ENCODE measurements at regions of chr20 and their contacts with region 1.

Region 1: DNA sequence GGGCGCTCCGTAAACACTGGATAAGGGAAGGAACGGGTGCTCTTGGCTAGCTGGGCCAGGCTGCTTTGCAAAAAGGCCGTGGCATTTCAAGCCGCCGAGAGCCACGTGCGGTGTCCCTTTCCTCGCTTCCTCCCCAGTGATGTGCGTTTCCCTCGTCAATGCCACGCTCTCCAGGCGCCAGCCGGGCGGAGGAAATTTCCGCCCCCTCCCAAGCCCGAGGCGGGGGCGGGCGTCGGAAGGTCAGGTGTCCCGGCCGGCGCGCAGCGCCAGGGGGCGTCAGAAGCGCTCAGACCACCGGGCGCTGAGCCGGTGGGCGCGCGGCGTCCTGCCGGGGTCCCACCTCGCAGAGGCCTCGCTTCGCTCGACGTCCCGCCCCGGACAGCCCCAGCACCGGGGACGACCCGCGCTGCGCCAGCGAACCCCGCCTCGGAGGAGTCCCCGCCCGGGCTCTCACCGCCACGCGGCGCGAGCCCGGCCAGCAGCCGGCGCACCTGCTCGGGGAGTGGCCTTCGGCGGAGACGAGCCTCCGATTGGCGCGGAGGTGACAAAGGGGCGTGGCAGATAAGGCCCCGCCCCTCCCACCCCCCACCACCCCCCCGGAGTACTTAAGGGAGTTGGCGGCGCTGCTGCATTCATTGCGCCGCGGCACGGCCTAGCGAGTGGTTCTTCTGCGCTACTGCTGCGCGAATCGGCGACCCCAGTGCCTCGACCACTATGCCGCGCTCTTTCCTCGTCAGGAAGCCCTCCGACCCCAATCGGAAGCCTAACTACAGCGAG is at the start of gene SNAI1:
- DNase-seq: peak; percentile 87
- ATAC-seq: peak; percentile 93
- H3K4me3 Mint-ChIP-seq: peak within 1 kb of the TSS; percentile 60
- H3K27ac Mint-ChIP-seq: peak within 1 kb of the TSS; percentile 25
- H3K4me1 Mint-ChIP-seq: peaks cover 31% of the 10 kb centered on the region
- H3K27me3 Mint-ChIP-seq: peaks cover 20% of the 10 kb centered on the region
- total RNA-seq, gene SNAI1: 0.37 to 0.47 TPM

Region 2: DNA sequence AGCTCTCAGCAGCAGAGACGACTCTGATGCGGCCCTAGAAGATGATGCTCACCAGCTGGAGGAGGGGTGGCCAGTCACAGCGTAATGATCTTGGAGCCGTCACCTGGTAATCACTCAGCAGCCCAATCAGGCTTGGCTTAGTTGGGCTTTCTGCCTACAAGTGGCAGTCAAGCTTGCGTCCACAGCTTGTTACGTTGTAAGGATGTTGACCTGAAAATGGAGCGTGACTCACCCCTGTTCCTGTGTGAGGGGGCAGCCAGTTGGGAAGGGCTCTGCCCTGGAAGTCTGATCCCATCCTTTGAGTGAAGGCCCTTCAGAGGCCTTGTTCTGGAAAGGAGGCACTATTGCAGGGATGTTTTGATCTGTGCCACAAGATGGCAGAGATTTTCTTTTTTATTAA is 117.0 kb before region 1 on chr20:
- CTCF ChIA-PET with region 1: no interaction called
- POLR2A ChIA-PET with region 1: no interaction called
- DNase-seq: no peak
- ATAC-seq: no peak
- H3K4me3 Mint-ChIP-seq: no peak overlapping the region
- H3K27ac Mint-ChIP-seq: no peak overlapping the region
- H3K4me1 Mint-ChIP-seq: peaks cover 8% of the 10 kb centered on the region
- H3K27me3 Mint-ChIP-seq: no peaks in the 10 kb centered on the region

Region 3: GRCh38 chr20:49909499-49910339 is 72.8 kb before region 1 on chr20:
- CTCF ChIA-PET with region 1: no interaction called
- POLR2A ChIA-PET with region 1: no interaction called
- DNase-seq: no peak
- ATAC-seq: no peak
- H3K4me3 Mint-ChIP-seq: no peak overlapping the region
- H3K27ac Mint-ChIP-seq: peak overlapping the region; percentile 44
- H3K4me1 Mint-ChIP-seq: peaks cover 17% of the 10 kb centered on the region
- H3K27me3 Mint-ChIP-seq: no peaks in the 10 kb centered on the region

Region 4: DNA sequence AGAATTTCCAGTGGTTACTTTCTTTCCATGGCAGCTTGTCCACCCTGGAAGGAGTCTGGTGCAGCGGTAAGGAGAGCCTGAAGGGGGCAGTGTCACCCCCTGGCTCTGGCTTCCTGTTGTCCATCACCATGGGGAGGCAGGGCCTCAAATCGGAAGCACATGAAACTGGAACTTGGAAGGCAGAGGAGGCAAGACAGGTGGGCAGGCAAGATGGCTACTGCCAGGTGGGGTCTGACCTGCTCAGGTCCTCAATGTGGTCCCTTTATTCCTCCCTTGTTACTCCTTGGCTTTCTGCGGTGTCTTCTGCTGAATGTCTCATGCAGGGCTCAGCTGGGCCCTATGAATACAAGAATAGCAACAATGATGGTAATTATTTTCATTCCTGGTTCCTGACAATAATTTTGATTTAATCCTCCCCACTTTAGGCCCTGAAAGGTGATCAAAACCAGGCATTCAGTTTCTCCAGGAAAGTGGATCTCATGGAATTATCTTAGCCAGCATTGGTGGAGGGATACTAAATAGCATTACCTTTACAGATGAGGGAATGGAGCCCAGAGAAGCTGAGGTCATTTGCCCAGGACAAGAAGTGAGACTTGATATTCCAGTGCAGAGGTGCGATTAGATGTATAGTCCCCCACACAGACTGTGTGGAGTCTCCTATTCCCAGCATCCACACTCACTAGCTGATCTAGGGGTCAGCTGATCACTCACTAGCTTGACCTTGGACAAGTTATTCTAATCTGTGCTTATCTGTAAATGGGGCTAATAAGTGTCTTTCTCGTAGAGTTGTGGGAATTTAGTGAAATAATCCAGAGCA is 17.4 kb before region 1 on chr20:
- CTCF ChIA-PET with region 1: interaction called, 17 read pairs
- POLR2A ChIA-PET with region 1: no interaction called
- DNase-seq: peak; percentile 34
- ATAC-seq: peak; percentile 58
- H3K4me3 Mint-ChIP-seq: no peak overlapping the region
- H3K27ac Mint-ChIP-seq: no peak overlapping the region
- H3K4me1 Mint-ChIP-seq: no peaks in the 10 kb centered on the region
- H3K27me3 Mint-ChIP-seq: no peaks in the 10 kb centered on the region

Region 5: DNA sequence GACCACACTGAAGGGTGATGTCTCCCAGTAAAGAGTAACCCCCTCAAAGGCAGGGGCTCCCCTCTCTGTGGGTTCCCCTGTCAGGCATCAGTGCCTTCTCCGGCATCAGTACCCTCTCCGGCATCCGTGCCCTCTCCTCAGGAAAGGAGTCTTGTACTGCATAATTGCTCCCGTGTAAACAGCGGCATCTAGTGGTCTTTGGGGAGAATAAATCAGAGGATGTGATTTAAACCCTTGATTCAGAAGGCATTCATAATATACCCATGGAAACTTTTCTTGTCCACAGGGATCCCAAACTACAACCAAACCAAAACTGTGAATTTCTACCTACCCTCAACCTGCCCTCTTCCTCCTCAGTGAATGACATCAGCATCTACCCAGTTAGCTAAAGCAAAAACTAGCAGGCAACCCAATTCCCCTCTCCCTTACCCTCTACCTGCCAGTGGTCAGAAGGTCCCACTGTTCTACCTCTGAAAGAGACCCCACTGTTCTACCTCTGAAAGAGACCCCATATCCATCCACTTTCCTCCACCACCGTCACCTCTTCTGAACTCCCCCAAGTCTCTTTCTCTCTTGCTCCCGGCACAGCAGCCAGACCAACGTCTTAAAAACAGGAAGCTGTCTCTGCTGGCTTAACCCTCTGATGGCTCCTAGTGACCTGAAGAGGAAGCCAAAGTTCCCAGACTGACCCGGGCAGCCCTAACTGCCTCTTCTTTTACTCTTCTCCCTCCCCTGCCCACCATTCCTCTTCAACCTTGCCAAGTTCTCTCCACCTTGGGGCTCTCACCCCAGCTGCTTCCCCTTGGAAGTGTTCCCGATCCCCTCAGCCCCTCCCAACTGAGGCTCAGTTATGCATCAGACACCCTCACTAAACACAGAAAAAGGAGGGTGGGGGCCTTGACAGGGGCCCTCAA is 103.2 kb after region 1 on chr20:
- CTCF ChIA-PET with region 1: interaction called, 64 read pairs
- POLR2A ChIA-PET with region 1: interaction called, 3 read pairs
- DNase-seq: peak; percentile 54
- ATAC-seq: peak; percentile 83
- H3K4me3 Mint-ChIP-seq: peak overlapping the region; percentile 64
- H3K27ac Mint-ChIP-seq: peak overlapping the region; percentile 80
- H3K4me1 Mint-ChIP-seq: peaks cover 22% of the 10 kb centered on the region
- H3K27me3 Mint-ChIP-seq: no peaks in the 10 kb centered on the region

Region 6: DNA sequence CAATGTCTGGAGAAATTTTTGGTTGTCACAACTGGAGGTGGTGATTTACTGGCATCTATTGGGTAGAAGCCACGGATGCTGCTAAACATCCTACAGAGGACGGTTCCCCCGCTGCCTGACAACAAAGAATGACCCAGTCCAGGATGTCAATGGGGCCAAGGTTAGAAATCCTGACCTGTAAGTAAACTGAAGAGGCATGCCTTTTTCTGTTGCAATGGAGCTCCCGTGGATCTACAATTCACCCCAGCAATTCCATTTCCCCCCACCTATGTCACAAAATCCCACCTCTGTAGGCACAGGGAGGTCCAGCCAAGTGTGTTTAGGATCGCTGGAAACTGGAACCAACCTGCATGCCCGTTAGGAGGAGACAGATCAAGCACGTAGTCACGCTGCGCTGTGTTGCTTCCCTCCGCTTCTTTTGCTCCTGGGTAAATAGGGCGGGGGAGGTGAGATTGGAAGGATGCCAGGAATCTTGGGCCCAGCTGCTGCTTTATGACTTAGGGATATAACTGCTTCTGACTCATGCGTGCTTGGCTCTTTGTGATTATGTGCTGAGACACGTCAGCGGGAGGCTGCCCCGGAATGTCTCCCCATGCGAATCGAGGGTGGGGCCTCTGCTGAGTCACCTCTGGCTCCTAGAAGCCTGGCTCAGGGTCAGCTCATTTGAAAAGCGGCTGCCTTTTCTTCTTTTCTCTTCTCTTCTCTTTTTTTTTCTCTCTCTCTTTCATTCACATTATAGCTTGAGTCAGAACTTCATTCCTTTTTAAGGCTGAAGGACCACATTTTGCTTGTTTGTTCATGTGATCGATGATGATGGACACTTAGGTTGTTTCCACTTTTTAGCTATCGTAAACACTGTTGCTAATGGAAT is 183.4 kb after region 1 on chr20:
- CTCF ChIA-PET with region 1: interaction called, 36 read pairs
- POLR2A ChIA-PET with region 1: no interaction called
- DNase-seq: peak; percentile 79
- ATAC-seq: peak; percentile 95
- H3K4me3 Mint-ChIP-seq: peak overlapping the region; percentile 69
- H3K27ac Mint-ChIP-seq: peak overlapping the region; percentile 80
- H3K4me1 Mint-ChIP-seq: peaks cover 14% of the 10 kb centered on the region
- H3K27me3 Mint-ChIP-seq: peaks cover 2% of the 10 kb centered on the region

Region 7: DNA sequence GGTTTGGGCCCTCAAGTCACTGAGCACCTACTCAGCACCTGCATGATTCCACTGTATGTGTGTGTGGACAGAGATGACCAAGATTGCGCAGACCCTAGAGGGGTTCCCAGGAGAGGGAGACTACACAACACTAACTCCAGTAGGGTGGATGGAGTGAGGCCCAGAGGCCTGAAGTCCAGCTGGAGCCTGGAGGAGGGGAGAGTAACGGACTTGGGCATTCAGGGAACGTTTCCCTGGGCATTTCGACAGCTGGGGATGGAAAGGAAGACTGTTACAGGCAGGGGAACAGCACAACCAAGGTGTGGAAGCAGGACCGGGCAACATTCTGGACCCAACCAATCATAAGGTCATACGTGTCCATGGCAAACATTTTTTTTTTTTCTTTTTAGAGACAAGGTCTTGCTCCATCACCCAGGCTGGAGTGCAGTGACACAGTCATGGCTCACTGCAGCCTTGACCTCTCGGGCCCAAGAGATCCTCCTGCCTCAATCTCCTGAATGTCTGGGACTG is 197.0 kb after region 1 on chr20:
- CTCF ChIA-PET with region 1: interaction called, 10 read pairs
- POLR2A ChIA-PET with region 1: no interaction called
- DNase-seq: no peak
- ATAC-seq: no peak
- H3K4me3 Mint-ChIP-seq: no peak overlapping the region
- H3K27ac Mint-ChIP-seq: no peak overlapping the region
- H3K4me1 Mint-ChIP-seq: no peaks in the 10 kb centered on the region
- H3K27me3 Mint-ChIP-seq: peaks cover 15% of the 10 kb centered on the region